ENCODE measurements at regions of chr20 and their contacts with region 1.

Region 1: DNA sequence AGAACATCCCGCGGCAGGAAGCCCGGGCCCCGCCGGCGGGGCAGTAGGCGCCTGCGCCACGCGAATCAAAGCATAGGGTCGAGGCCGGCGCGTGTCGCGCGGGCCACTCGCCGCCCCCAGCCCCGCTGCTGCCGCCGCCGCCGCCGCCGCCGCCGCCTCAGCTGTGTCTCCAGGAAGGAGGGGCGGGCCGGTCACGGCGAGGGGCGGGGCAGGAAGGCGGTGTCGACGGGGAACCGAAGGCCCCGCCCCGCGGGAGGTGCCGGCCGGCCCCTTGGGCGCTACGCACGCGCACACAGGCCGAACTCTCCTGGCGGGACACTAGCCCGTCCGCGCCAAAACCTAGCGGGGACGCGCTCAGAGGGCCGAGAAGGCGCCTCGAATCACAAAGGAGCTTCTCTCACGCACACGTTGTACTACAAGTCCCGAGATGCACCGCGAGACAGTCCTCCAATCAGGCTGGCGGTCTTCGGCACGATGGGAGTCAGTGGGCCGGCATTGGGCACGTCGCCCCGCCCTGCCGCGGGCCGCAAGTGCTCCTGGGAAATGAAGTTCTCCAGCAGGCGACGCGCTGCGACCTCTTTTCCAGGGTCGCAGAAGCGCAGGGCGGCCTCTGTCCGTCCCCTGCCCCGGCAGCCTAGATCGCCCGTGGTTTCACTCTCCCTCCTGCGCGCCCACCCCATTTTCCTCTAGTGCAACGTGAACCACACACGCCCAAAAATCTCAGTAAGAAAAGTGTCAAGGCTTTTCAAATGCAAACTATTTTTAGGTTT is at the start of gene RALGAPA2:
- DNase-seq: peak; percentile 99
- H3K4me3 ChIP-seq: peak within 1 kb of the TSS; percentile 74 to 93
- H3K27ac ChIP-seq: peak within 1 kb of the TSS; percentile 75 to 84
- H3K4me1 ChIP-seq: peaks cover 0 to 19% (median 11%) of the 10 kb centered on the region in 4 donors
- H3K27me3 ChIP-seq: no peaks in the 10 kb centered on the region
- CTCF ChIP-seq: no peak

Region 2: GRCh38 chr20:21303061-21303871 is 590.6 kb after region 1 on chr20 and contains the start of gene XRN2:
- intact Hi-C with region 1: loop called (anchors 5 kb)
- DNase-seq: peak; percentile 94 to 97
- H3K4me3 ChIP-seq: peak within 1 kb of the TSS; percentile 88 to 98
- H3K27ac ChIP-seq: peak within 1 kb of the TSS; percentile 95 to 99
- H3K4me1 ChIP-seq: peaks cover 0 to 19% (median 5%) of the 10 kb centered on the region in 4 donors
- H3K27me3 ChIP-seq: no peaks in the 10 kb centered on the region
- CTCF ChIP-seq: no peak